ENCODE measurements at regions of chr11 and their contacts with region 1.

Region 1: DNA sequence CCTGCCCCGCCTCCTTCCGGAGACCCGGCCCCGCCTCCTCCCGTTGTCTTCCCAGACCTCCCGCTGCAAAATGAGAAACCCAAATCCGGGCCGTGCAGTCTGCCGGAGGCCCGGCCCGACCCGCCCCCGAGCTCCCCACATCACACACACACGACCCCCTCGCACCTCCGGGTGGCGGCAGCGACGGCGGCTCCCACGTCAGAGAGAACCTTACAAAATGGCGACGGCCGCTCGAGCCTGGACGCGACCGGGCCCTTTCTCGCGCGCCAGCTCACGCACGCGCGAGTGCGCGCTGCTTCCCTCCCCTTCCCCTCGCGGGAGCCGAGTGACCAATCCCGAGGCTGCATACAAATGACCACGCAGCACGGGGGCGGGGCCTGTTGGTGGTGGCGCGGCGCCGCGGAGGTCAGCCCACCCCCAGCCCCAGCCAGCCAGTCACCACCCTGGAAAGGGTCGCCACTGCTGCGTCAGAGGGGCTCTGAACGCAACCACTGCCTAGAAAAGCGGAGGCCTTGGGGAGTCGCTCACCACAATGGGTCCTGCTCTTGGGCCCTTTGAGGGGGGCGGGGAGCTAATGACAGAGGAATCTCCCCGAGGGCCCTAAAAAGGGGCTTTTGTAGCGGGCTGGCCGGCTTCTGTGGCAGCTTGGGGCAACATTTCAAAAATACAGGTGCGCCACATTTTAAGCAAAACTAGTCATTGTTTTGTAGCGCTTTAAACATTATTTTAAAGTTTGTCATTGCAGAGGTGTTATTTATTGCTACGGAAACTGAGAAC is at the start of gene RBM4B:
- DNase-seq: peak; percentile 95 to 98 (median 96)
- H3K4me3 ChIP-seq: peak within 1 kb of the TSS; percentile 81
- H3K27ac ChIP-seq: peak within 1 kb of the TSS; percentile 70 to 96
- H3K4me1 ChIP-seq: peaks cover 14% of the 10 kb centered on the region
- H3K27me3 ChIP-seq: no peaks in the 10 kb centered on the region
- CTCF ChIP-seq: peak in 1 of 3 donors; percentile 11
- EP300 ChIP-seq: peak; percentile 33
- POLR2A ChIP-seq: peak; percentile 78
- total RNA-seq, gene RBM4B: 16.1 to 34.4 (median 27.6) TPM

Region 2: GRCh38 chr11:66418168-66418985 is 259.4 kb before region 1 on chr11:
- intact Hi-C with region 1: loop called in 2 of 4 experiments (anchors 5 to 10 kb)
- DNase-seq: peak; percentile 50 to 78 (median 69)
- H3K4me3 ChIP-seq: no peak overlapping the region
- H3K27ac ChIP-seq: no peak overlapping the region
- H3K4me1 ChIP-seq: peaks cover 7% of the 10 kb centered on the region
- H3K27me3 ChIP-seq: no peaks in the 10 kb centered on the region
- CTCF ChIP-seq: no peak
- EP300 ChIP-seq: no peak
- POLR2A ChIP-seq: no peak

Region 3: GRCh38 chr11:66479394-66480116 is 198.2 kb before region 1 on chr11:
- intact Hi-C with region 1: loop called in 1 of 4 experiments (anchors 10 kb)
- DNase-seq: peak in 4 of 5 donors; percentile 48 to 66 (median 56)
- H3K4me3 ChIP-seq: peak overlapping the region; percentile 59
- H3K27ac ChIP-seq: peak overlapping the region; percentile 49 to 82
- H3K4me1 ChIP-seq: peaks cover 2% of the 10 kb centered on the region
- H3K27me3 ChIP-seq: no peaks in the 10 kb centered on the region
- CTCF ChIP-seq: peak in 1 of 3 donors; percentile 19
- EP300 ChIP-seq: no peak
- POLR2A ChIP-seq: no peak

Region 4: GRCh38 chr11:66579017-66579606 is 98.7 kb before region 1 on chr11:
- intact Hi-C with region 1: loop called in 3 of 4 experiments (anchors 2 to 5 kb)
- DNase-seq: peak; percentile 77 to 89 (median 84)
- H3K4me3 ChIP-seq: no peak overlapping the region
- H3K27ac ChIP-seq: no peak overlapping the region
- H3K4me1 ChIP-seq: no peaks in the 10 kb centered on the region
- H3K27me3 ChIP-seq: no peaks in the 10 kb centered on the region
- CTCF ChIP-seq: peak; percentile 80 to 86 (median 82)
- EP300 ChIP-seq: no peak
- POLR2A ChIP-seq: no peak

Region 5: DNA sequence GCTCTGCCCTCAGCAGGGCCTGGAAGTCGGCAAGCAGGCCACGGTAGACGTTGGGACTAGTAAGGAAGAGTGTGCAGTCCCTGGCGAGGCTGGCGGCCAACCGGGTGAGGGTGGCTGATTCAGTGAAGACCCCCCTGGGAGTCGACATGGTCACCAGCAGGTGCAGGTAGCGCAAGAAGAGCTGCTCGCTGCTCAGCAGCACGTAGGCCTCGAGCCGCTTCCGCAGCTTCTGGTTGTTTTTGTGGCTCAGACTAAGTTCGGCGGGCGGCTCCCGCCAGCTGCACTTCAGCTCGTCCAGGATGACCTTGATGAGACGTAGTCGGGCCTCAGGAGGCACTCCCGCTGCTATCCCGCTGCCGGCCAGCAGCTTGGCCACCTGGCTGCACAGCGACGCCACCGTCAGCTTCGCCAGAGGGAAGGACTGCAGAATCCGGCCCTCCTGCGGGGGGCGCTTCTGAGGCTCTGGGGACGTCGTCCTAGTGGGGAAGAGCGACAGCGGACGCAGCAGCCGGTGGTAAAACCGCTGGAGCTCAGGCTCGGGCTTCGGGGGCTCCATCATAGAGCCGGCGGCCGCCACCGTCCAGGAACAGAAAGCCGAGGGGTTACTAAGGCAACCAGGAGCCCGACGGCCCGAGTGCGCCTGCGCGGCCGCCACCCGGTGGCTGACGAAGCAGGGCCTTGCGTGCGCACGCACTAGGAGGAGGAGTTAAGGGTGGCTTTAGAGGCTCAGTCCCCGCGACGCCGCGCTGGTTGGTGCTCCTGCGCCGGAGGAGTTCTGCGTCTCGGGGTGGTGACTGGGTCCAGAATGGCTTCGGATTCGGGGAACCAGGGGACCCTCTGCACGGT is 85.1 kb before region 1 on chr11 and contains the starts of genes CCDC87 and CCS:
- intact Hi-C with region 1: loop called in 1 of 4 experiments (anchors 10 kb)
- DNase-seq: peak; percentile 98 to 99 (median 99)
- H3K4me3 ChIP-seq: peak within 1 kb of the TSS; percentile 63
- H3K27ac ChIP-seq: peak within 1 kb of the TSS; percentile 45 to 82
- H3K4me1 ChIP-seq: peaks cover 14% of the 10 kb centered on the region
- H3K27me3 ChIP-seq: no peaks in the 10 kb centered on the region
- CTCF ChIP-seq: peak; percentile 29 to 84 (median 79)
- EP300 ChIP-seq: no peak
- POLR2A ChIP-seq: peak; percentile 96
- total RNA-seq, gene CCDC87: 0.33 to 0.60 (median 0.46) TPM
- total RNA-seq, gene CCS: 27.7 to 53.1 (median 49.1) TPM

Region 6: DNA sequence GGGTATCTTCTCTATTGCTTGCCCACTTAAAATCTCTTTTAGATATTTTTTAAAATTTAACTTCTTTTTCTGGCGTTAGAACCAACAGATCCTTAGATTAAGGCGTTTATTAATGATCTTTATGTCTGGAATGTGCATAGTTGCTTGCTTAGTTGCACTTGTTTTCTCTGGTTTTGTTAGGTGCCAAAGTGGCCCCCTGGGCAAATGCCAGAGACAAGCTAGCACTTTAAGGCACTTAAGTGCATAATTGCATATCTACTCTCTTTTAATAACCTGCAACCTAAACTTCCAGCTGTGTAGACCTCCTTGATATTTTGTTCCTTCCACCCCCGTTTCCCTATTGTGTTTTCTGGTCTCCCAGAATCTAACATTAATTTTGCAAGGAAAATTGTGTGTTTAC is 36.0 kb before region 1 on chr11:
- intact Hi-C with region 1: loop called in 1 of 4 experiments (anchors 1 kb)
- DNase-seq: no peak
- H3K4me3 ChIP-seq: peak overlapping the region; percentile 20
- H3K27ac ChIP-seq: no peak overlapping the region
- H3K4me1 ChIP-seq: peaks cover 27% of the 10 kb centered on the region
- H3K27me3 ChIP-seq: no peaks in the 10 kb centered on the region
- CTCF ChIP-seq: no peak
- EP300 ChIP-seq: no peak
- POLR2A ChIP-seq: no peak